ENCODE measurements at regions of chr3 and their contacts with region 1.

Region 1: GRCh38 chr3:71035314-71035713 is 548.2 kb downstream of the FOXP1 start:
- DNase-seq: peak; percentile 62 to 91 (median 90)
- H3K4me3 ChIP-seq: no peak overlapping the region
- H3K27ac ChIP-seq: peak overlapping the region in 1 of 2 experiments; percentile 27
- H3K4me1 ChIP-seq: peaks cover 9 to 22% (median 17%) of the 10 kb centered on the region in 4 experiments
- H3K27me3 ChIP-seq: no peaks in the 10 kb centered on the region

Region 2: DNA sequence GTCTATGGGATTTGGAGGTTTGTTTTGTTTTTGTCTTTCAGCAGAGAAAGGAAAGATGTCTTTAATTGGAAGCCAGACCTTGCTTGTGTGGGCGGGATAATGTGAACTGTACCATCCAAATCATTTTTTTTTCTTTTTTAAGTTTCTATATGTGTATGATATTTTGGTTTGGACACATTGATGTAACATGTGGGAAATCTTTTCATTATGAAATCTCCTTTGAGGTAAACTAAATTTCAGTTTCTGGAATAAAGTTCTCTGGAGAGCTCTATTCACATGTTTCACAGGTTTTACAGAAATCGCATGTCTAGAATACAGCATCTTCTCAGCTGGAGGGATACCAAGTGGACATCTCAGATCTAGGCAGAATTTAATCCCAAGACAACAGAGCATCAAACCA is 271.4 kb before region 1 on chr3:
- CTCF ChIA-PET with region 1: no interaction called
- POLR2A ChIA-PET with region 1: no interaction called
- DNase-seq: no peak
- H3K4me3 ChIP-seq: no peak overlapping the region
- H3K27ac ChIP-seq: no peak overlapping the region
- H3K4me1 ChIP-seq: no peaks in the 10 kb centered on the region
- H3K27me3 ChIP-seq: no peaks in the 10 kb centered on the region

Region 3: DNA sequence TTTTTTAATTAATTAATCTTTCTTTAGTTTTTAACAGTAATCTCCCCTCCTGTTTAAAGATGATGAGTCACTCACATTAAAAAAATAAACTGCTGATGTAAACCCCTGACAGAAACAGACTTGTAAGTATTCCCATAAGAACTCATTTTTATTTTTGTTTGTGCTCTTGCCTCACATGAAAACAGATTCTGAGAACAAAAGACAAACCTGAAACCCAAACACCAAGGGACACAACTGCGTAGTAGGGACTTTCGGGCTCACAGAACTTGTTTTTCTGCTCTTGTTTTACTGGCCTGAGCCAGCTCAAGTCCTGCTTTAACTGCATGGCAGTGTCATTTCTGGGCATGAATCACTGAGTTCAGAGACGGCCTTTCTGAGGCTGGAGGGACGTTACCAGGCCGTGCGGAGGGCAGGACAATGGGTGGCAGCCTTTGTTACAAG is 52.6 kb before region 1 on chr3:
- CTCF ChIA-PET with region 1: no interaction called
- POLR2A ChIA-PET with region 1: no interaction called
- DNase-seq: peak; percentile 19 to 55 (median 38)
- H3K4me3 ChIP-seq: no peak overlapping the region
- H3K27ac ChIP-seq: peak overlapping the region; percentile 11 to 78
- H3K4me1 ChIP-seq: peaks cover 0 to 14% (median 6%) of the 10 kb centered on the region in 4 experiments
- H3K27me3 ChIP-seq: no peaks in the 10 kb centered on the region

Region 4: GRCh38 chr3:71022551-71023335 is 12.6 kb before region 1 on chr3:
- CTCF ChIA-PET with region 1: interaction called, 12 read pairs
- POLR2A ChIA-PET with region 1: no interaction called
- DNase-seq: no peak
- H3K4me3 ChIP-seq: no peak overlapping the region
- H3K27ac ChIP-seq: no peak overlapping the region
- H3K4me1 ChIP-seq: no peaks in the 10 kb centered on the region
- H3K27me3 ChIP-seq: no peaks in the 10 kb centered on the region

Region 5: DNA sequence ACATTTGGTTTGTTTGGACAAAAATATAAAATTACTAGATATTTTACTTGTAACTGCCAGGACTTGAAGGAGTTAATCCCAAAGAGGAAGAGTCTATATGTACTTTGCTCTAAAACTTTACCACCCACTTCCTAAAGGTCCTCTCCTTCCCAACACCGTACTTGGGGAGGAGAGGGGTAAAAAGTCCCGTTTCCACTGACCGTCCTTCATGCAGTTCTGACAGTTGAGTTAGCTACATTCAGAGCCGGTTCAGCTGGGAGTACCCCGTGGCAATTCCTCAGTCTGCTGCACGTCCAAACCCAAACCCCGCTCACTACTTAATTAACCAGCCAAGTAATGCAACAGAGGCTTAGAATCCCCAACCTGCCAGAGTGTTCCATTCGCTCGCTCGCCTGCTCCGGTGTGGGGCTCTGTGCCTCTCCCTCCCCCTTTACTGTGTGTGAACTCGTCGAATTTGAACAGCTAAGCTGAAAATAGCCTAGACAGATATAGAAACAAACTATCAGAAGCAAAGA is 28.5 kb after region 1 on chr3:
- CTCF ChIA-PET with region 1: interaction called, 11 read pairs
- POLR2A ChIA-PET with region 1: interaction called, 5 read pairs
- DNase-seq: peak in 1 of 3 donors; percentile 50
- H3K4me3 ChIP-seq: peak overlapping the region; percentile 7 to 89 (median 81)
- H3K27ac ChIP-seq: peak overlapping the region in 1 of 2 experiments; percentile 79
- H3K4me1 ChIP-seq: peaks cover 38 to 81% (median 58%) of the 10 kb centered on the region in 4 experiments
- H3K27me3 ChIP-seq: no peaks in the 10 kb centered on the region

Region 6: DNA sequence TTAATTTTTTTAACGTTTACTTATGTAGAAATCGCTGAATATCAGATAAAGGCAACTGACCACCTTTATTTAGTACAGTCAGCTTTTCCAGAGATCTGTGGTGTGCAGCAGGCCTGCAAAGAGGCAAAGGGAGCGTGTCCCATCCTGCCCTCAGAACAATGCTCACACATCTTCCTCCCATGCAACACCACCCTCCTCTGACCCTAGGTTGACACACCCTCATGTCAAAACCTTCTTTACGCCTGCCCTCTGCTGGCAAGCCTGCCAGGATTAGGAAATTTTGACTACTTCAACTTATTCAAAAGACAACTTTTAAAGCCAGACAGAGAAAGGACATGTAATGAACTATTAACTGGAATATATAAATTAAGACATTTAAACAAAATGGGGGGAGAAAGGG is 34.5 kb after region 1 on chr3:
- CTCF ChIA-PET with region 1: interaction called, 12 read pairs
- POLR2A ChIA-PET with region 1: interaction called, 5 read pairs
- DNase-seq: peak; percentile 64 to 77 (median 76)
- H3K4me3 ChIP-seq: no peak overlapping the region
- H3K27ac ChIP-seq: no peak overlapping the region
- H3K4me1 ChIP-seq: peaks cover 17 to 63% (median 53%) of the 10 kb centered on the region in 4 experiments
- H3K27me3 ChIP-seq: no peaks in the 10 kb centered on the region

Measured in common myeloid progenitor, CD34-positive (primary cell).